Panc1 (cell line): ENCODE measurements at regions of chr10 and their contacts with region 1.

Region 1: GRCh38 chr10:31836569-31837406 is 91.8 kb downstream of the ARHGAP12 start:
- DNase-seq: peak; percentile 13
- ATAC-seq: peak; percentile 78
- H3K4me3 ChIP-seq: no peak overlapping the region
- H3K27ac ChIP-seq: 0 out of 2 replicates have a peak overlapping the region, but pooled peaks have one; percentile 23
- H3K4me1 ChIP-seq: no peaks in the 10 kb centered on the region; the same call in 1 of the 2 replicates
- H3K27me3 ChIP-seq: no peaks in the 10 kb centered on the region
- CTCF ChIP-seq: peak; percentile 78

Region 2: GRCh38 chr10:32004161-32004591 is 167.4 kb after region 1 on chr10:
- CTCF ChIA-PET with region 1: no interaction called
- POLR2A ChIA-PET with region 1: no interaction called
- in situ Hi-C with region 1: no loop called
- intact Hi-C with region 1: loop called (anchors 5 kb)
- DNase-seq: no peak
- ATAC-seq: peak; percentile 74
- H3K4me3 ChIP-seq: no peak overlapping the region
- H3K27ac ChIP-seq: no peak overlapping the region
- H3K4me1 ChIP-seq: peaks cover 7% of the 10 kb centered on the region; the same call in 1 of the 2 replicates
- H3K27me3 ChIP-seq: no peaks in the 10 kb centered on the region
- CTCF ChIP-seq: no peak